Dorsolateral prefrontal cortex (tissue), 120 donors: ENCODE measurements at regions of chr1 and their contacts with region 1.

Region 1: DNA sequence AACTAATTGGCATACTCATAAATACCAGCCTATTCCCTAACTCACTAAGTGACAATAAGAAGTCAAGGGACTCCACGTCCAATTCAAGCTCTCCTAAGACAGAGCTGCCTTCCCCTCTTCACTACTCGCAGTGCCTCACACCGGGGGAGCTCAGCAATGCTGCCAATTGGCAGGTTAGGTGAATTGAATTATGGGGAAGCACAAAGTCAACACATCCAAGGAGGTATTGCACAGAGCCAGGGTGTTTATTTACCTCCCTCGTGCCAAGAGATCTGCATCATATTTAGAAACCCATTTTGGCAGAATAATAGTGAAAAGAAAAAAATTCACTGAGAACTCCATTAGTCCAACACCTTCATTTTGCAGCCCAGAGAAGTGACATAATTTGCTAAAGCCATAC is 20.4 kb upstream of the TNR start:
- DNase-seq: no peak
- H3K4me3 ChIP-seq: no peak overlapping the region
- H3K27ac ChIP-seq: no peak overlapping the region
- H3K27me3 ChIP-seq: no peaks in the 10 kb centered on the region
- CTCF ChIP-seq: no peak

Region 2: DNA sequence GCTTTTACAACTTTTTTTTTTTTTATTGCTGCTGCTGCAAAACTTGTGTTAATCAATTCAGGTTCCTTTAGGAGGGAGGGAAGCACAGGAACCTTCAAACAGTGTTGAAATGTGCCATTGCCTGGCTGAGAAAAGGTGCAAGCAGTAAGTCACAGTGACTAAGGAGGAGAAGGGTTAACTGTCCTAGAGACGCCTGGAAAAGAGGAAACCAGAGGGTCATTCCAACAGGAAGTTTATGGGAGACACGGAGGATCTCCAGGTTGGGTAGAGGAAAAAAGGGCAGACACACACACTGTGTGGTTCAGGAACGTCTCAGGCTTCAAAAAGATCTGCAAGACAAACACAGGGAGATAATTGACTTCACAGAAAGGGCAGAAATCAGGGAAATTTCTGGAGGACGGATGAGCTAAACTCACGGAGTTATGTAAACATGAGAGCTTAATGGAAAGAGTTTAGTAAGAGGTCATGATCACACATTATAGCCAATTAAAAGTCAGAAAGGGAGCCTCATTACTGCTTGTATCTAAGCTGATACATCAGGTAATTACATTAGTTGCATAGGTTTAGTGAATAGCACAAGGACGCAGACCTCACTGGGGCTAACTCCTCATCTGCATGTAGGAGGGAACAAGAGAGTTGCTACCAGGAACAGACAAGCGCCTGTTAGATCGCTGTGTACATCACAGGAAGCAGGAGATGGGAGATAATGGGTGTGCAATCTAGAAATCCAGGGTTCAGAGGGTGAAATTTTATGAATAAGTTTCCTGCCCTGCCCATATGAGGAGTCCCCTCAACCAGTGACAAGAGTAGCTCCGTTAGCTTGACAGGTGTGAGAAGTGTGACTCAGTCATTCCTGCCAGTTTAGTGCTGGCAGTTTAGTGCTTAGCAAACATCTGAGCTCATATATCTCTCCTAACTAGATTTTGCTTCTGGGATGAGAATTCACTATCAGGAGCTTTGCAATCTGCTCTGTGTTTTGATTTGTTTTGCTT is 76.2 kb after region 1 on chr1:
- intact Hi-C with region 1: loop called in 1 of 2 experiments (anchors 5 kb)
- DNase-seq: no peak
- H3K4me3 ChIP-seq: no peak overlapping the region
- H3K27ac ChIP-seq: no peak overlapping the region
- H3K27me3 ChIP-seq: no peaks in the 10 kb centered on the region
- CTCF ChIP-seq: no peak